ENCODE measurements at regions of chr7 and their contacts with region 1.

Region 1: DNA sequence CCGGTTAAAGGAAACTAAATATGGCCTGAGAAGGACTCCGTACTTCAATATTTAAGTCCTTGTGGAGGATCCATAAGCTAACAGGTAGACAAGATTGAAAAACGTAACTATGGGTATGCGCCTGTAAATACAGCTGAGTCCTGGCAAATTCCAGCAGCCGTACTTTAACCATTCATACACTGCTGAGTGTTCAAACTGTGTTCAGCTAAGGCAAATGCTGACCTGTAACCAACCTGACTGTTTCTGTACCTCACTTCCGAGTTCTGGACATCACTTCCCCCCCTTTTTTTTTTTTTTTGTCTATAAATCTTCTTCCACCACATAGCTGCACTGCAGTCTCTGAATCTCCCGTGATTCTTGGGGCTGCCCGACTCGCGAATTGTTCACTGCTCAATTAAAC is 69.1 kb downstream of the SRPK2 start:
- DNase-seq: no peak
- ATAC-seq: no peak
- H3K4me3 Mint-ChIP-seq: peak overlapping the region; percentile 33
- H3K27ac Mint-ChIP-seq: peak overlapping the region; percentile 24
- H3K4me1 Mint-ChIP-seq: peaks cover 79% of the 10 kb centered on the region
- H3K27me3 Mint-ChIP-seq: no peaks in the 10 kb centered on the region
- CTCF ChIP-seq: no peak

Region 2: GRCh38 chr7:105278973-105279687 is 40.4 kb before region 1 on chr7:
- CTCF ChIA-PET with region 1: no interaction called
- POLR2A ChIA-PET with region 1: interaction called, 10 read pairs
- intact Hi-C with region 1: no loop called
- DNase-seq: no peak
- ATAC-seq: no peak
- H3K4me3 Mint-ChIP-seq: no peak overlapping the region
- H3K27ac Mint-ChIP-seq: no peak overlapping the region
- H3K4me1 Mint-ChIP-seq: peaks cover 17% of the 10 kb centered on the region
- H3K27me3 Mint-ChIP-seq: no peaks in the 10 kb centered on the region
- CTCF ChIP-seq: no peak

Measured in activated B cell treated with CpG ODN at 0.5 μM for 24 hours (primary cell).